ENCODE measurements at regions of chr2 and their contacts with region 1.

Region 1: DNA sequence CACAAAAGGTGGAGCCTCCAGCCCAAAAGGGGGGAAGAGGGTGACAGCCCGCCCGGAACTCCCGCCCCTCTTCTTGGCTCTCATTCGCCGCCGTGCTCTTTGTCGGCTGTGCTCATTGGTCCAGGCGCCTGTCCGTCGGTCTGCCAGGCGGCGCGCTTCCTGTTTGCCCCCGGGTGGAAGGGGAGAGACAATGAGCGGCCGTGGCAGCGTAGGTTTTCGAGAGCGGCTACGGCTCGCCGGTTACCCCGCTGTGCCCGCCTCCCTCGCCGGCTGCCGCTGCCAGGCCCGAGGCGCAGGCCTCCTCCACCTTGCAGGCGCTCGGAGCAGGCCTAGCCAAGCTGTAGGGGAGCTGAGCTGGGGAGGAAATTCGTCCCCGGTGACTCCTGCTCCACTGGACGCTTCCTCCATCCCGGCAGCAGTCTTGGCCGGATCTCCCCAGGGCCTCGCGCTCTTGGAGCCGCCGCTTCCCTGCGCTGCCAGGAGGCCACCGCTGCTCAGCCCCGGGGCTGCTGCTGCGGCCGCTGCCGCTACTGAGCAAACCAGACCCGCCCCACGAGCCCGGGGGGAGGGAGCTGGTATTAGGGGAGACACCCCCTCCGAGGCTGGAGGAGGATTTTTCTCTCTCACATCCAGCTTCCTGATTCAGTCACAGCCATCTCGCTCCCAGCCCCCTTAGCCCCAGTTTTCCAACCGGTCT is at the start of gene SP3:
- DNase-seq: peak; percentile 98
- H3K4me3 Mint-ChIP-seq: peak within 1 kb of the TSS; percentile 86
- H3K27ac Mint-ChIP-seq: peak within 1 kb of the TSS; percentile 100
- H3K4me1 Mint-ChIP-seq: peaks cover 26% of the 10 kb centered on the region
- H3K27me3 Mint-ChIP-seq: no peaks in the 10 kb centered on the region
- total RNA-seq, gene SP3: 79.9 to 90.1 TPM

Region 2: DNA sequence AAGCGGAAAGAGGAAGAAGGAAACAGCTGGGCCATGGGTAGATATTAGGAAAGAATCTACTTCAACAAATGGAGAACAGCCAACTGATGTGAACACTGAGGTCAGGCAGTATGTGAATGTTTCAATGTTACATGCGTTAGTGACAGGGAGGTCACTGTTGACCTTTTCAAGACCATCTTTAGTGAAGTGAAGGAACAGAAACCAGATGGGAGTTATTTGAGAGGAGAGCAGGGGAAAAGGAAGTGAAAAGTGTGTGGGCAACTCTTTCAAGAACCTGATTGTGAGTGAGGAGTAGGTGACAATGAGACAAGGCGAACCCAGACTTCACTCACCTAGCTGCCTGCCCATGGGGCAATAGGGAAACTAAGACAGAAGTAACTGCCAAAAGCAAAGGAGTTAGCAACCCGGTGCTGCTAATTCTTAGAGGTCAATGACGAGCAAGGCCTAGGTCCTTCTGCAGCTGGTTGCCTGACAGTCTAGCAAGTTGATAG is 67.3 kb before region 1 on chr2:
- CTCF ChIA-PET with region 1: no interaction called
- POLR2A ChIA-PET with region 1: no interaction called
- intact Hi-C with region 1: loop called (anchors 2 kb)
- DNase-seq: no peak
- H3K4me3 Mint-ChIP-seq: no peak overlapping the region
- H3K27ac Mint-ChIP-seq: peak overlapping the region; percentile 10
- H3K4me1 Mint-ChIP-seq: peaks cover 23% of the 10 kb centered on the region
- H3K27me3 Mint-ChIP-seq: no peaks in the 10 kb centered on the region

Region 3: GRCh38 chr2:173978447-173978846 is 13.0 kb after region 1 on chr2:
- CTCF ChIA-PET with region 1: no interaction called
- POLR2A ChIA-PET with region 1: no interaction called
- intact Hi-C with region 1: loop called (anchors 1 kb)
- DNase-seq: peak; percentile 52
- H3K4me3 Mint-ChIP-seq: no peak overlapping the region
- H3K27ac Mint-ChIP-seq: peak overlapping the region; percentile 46
- H3K4me1 Mint-ChIP-seq: peaks cover 24% of the 10 kb centered on the region
- H3K27me3 Mint-ChIP-seq: peaks cover 10% of the 10 kb centered on the region

Region 4: GRCh38 chr2:174039551-174040416 is 74.3 kb after region 1 on chr2:
- CTCF ChIA-PET with region 1: interaction called, 8 read pairs
- POLR2A ChIA-PET with region 1: interaction called, 4 read pairs
- intact Hi-C with region 1: loop called (anchors 1 kb)
- DNase-seq: peak; percentile 90
- H3K4me3 Mint-ChIP-seq: peak overlapping the region; percentile 43
- H3K27ac Mint-ChIP-seq: peak overlapping the region; percentile 86
- H3K4me1 Mint-ChIP-seq: peaks cover 17% of the 10 kb centered on the region
- H3K27me3 Mint-ChIP-seq: peaks cover 7% of the 10 kb centered on the region

Region 5: DNA sequence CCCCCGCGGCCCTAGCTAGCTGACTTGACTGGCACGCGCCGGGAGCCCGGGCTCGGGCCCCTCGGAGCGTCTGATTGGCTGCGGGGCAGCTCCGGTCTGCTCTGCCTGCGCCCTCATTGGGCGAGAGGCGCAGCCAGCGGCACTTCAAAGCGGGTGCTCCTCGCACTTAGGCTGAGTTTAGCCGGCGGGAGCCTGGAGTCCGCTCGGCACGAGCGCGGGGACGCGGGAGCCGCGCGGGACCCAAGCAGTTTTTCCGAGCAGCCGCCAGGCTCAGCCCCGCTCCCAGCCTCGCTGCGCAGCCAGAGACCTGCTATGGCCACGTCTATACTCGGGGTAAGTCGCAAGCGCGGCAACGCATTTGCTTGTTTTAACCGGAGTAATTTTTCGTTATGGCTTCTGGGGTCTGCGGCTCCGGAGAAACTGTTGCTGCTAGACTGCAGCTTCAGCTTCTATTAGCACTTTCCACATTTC is 369.3 kb after region 1 on chr2 and contains the start of gene SP9:
- CTCF ChIA-PET with region 1: no interaction called
- POLR2A ChIA-PET with region 1: no interaction called
- intact Hi-C with region 1: loop called (anchors 2 kb)
- DNase-seq: peak; percentile 42
- H3K4me3 Mint-ChIP-seq: peak within 1 kb of the TSS; percentile 46
- H3K27ac Mint-ChIP-seq: peak within 1 kb of the TSS; percentile 73
- H3K4me1 Mint-ChIP-seq: peaks cover 40% of the 10 kb centered on the region
- H3K27me3 Mint-ChIP-seq: peaks cover 74% of the 10 kb centered on the region
- total RNA-seq, gene SP9: not detected

Region 6: GRCh38 chr2:174593574-174594203 is 628.2 kb after region 1 on chr2:
- CTCF ChIA-PET with region 1: no interaction called
- POLR2A ChIA-PET with region 1: no interaction called
- intact Hi-C with region 1: loop called (anchors 5 kb)
- DNase-seq: peak; percentile 79
- H3K4me3 Mint-ChIP-seq: peak overlapping the region; percentile 81
- H3K27ac Mint-ChIP-seq: peak overlapping the region; percentile 98
- H3K4me1 Mint-ChIP-seq: peaks cover 71% of the 10 kb centered on the region
- H3K27me3 Mint-ChIP-seq: no peaks in the 10 kb centered on the region